HCT116 (cell line): ENCODE measurements at regions of chr3 and their contacts with region 1.

Region 1: DNA sequence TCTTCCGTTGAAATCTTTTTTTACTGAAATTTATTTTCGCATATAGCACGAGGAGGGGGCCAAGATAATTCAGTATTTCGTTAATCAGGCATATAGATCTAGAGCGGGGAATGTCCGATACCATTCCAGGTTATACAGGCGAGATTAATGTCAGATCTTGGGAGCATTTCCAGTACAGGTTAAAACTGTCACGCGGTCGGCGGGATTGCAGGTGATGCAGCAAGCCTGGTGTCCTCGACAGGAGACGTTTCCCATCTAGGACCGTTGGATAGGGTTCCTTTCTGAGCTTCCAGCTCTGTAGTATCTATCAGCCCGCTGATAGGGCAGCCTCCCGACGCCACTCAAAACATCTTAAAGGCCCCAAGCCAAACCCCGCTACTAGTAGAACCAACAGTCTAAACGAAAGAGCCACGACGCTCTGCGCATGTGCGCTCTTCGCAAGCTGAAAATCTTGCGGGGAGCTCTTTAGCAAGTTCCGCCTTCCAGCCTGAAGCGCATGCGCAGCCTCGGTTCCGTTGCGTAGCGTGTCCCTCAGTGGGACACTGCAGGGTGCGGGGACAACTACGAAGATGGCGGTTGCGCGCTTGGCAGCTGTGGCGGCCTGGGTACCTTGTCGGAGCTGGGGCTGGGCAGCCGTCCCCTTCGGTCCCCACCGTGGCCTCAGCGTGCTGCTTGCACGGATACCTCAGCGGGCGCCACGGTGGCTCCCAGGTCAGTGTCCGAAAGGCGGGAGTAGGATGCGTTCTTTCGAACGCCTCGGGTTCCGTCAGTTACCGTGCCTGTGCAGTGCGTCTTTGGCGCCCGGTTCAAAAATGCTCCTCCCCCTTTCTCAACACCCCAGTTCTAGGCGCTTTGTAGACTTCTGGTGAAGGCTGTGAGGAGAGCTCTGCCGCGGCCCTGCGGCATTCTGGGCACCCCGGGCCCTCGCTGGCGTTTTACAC is at the start of gene ABHD10:
- DNase-seq: peak; percentile 100
- ATAC-seq: peak; percentile 94
- H3K4me3 ChIP-seq: peak within 1 kb of the TSS; percentile 77 to 78
- H3K27ac ChIP-seq: peak within 1 kb of the TSS; percentile 90
- H3K4me1 ChIP-seq: peaks cover 25 to 33% of the 10 kb centered on the region in 2 experiments
- H3K27me3 ChIP-seq: no peaks in the 10 kb centered on the region
- CTCF ChIP-seq: no peak
- POLR2A ChIP-seq: peak; percentile 89
- RAD21 ChIP-seq: no peak
- total RNA-seq, gene ABHD10: 295 TPM

Region 2: DNA sequence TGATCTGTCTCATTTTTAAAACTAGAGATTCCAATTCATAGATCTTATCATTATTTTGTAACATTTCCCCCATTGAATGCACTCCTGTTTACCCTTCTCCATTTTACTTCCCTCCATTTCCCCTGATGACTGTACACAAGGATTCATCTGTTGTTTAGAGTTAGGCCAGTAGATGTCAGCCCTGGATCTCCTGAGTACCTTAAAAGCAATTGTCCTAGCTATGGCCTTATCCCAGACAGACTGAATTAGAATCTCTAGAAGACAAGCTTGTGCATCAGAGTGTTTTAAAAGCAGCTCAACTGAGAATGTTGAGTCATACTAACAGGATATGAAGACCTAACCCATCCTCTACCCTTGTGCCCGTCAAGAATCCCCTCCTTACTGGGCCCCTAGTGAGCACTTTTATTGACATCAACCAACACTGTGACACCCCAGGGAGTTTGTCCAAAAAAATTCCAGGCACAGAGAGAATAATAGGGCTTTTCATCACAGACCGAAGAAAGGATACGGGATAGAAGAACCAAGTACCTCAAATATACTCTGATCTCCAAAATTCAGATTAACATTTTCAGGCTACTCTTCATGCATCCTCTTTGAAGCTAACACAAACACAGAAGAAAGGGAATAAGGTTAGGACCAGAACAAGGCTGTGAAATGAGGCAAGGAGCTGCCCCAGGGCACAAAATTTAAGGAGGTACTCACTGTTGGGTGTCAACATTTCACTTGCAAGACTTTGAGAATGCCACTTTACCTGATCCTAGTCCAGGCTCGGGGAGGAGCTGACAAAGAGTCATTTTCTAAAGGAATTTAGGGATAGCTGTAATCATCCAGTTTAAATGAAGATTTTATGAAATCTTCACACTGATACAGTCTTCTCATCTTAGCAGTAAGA is 400.7 kb before region 1 on chr3:
- CTCF ChIA-PET with region 1: interaction called, 3 read pairs
- POLR2A ChIA-PET with region 1: no interaction called
- RAD21 ChIA-PET with region 1: no interaction called
- intact Hi-C with region 1: loop called (anchors 10 kb)
- DNase-seq: peak; percentile 69
- ATAC-seq: peak; percentile 83
- H3K4me3 ChIP-seq: no peak overlapping the region
- H3K27ac ChIP-seq: peak overlapping the region; percentile 7; the same call in 1 of the 2 replicates
- H3K4me1 ChIP-seq: peaks cover 30 to 64% of the 10 kb centered on the region in 2 experiments
- H3K27me3 ChIP-seq: no peaks in the 10 kb centered on the region
- CTCF ChIP-seq: peak; percentile 60 to 79 (median 77)
- POLR2A ChIP-seq: no peak
- RAD21 ChIP-seq: peak; percentile 92

Region 3: DNA sequence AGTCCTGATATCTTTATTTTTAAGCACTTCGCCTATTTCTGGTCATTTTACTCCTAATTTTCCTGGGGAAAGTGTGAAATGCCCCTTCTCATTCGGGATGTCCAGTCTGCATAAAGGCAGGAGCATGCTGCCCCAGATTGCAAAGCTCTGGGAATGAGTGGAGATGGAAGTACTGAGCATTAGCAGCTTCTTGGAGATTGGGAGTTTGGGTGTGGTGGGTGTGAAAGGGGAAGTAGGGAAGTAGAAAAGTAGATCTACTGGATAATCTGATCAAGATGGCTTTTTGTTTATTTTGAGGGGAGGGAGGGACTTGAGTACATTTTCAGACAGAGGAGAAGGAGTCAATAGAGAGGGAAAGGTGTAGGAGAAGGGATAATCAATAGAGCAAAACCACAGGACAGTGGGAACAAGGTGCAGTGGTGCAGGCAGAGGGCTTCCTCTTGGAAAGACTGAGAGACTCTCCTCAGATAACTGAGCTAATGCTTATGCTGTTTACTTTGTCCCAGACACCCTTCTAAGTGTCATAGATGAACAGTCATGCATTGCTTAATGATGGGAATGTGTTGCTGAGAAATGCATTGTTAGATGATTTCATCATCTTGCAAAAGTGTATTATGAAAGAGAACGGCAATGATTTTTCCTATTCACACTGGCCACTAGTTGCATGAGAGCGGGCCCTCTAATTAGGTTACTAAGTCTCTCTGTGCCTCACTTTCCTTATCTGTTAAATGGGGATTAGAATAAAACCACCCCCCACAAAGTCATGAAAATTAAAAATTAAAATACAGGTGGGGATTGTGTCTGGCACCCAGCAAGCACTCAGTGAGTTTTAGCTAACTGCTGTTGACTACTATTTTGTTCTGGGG is 74.2 kb before region 1 on chr3:
- CTCF ChIA-PET with region 1: no interaction called
- POLR2A ChIA-PET with region 1: interaction called, 17 read pairs
- RAD21 ChIA-PET with region 1: no interaction called
- intact Hi-C with region 1: no loop called
- DNase-seq: peak; percentile 89
- ATAC-seq: peak; percentile 29
- H3K4me3 ChIP-seq: no peak overlapping the region
- H3K27ac ChIP-seq: peak overlapping the region; percentile 96
- H3K4me1 ChIP-seq: peaks cover 44 to 100% of the 10 kb centered on the region in 2 experiments
- H3K27me3 ChIP-seq: no peaks in the 10 kb centered on the region
- CTCF ChIP-seq: peak in 1 of 3 experiments; percentile 26; a peak in 2 of 6 replicates
- POLR2A ChIP-seq: no peak
- RAD21 ChIP-seq: no peak

Region 4: GRCh38 chr3:111936191-111936841 is 42.4 kb before region 1 on chr3:
- CTCF ChIA-PET with region 1: no interaction called
- POLR2A ChIA-PET with region 1: interaction called, 13 read pairs
- RAD21 ChIA-PET with region 1: no interaction called
- intact Hi-C with region 1: no loop called
- DNase-seq: peak; percentile 60
- ATAC-seq: peak; percentile 78
- H3K4me3 ChIP-seq: peak overlapping the region in 1 of 2 experiments; percentile 0; a peak in 1 of 4 replicates
- H3K27ac ChIP-seq: peak overlapping the region; percentile 96
- H3K4me1 ChIP-seq: peaks cover 66 to 78% of the 10 kb centered on the region in 2 experiments
- H3K27me3 ChIP-seq: no peaks in the 10 kb centered on the region
- CTCF ChIP-seq: no peak
- POLR2A ChIP-seq: no peak
- RAD21 ChIP-seq: 0 out of 2 replicates have a peak, but pooled peaks have one; percentile 2

Region 5: DNA sequence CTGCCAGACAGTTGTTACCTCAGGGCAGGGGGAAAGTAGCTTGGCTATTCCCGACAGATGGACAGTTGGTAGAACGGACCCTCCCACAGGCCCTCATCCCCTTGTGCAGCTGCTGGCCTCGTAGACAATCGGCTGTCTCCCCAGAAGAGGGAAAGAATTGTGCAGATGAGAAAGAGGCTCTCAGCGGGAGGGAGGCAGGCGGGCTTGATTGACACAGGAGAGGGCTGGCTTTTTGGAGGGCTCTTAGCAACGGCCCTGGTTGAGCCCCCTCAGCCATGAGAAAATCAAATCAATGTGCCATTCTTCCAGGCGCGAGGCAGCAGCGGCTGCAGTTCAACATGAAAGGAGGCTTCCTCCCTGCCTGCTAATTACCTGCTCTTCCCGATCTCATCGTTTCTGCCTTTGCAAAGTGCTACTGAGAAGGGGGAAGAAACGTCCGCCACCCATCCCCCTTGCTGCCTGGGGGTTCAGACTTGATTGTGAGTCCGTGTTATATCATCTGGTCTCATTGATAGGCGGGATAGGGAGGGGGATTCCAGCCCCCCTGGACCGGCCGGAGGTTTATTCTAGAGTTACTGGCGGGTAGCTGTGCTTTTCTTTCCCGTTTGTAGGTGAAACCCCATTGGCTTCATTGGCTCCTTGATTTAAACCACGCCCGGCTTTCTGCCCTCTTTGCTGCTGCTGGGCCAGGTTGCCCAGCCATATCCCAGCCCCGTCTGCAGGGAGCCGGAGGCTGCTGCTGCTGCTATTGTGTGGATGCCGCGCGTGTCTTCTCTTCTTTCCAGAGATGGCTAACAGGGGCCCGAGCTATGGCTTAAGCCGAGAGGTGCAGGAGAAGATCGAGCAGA is 20.1 kb after region 1 on chr3 and contains the start of gene TAGLN3:
- CTCF ChIA-PET with region 1: interaction called, 9 read pairs
- POLR2A ChIA-PET with region 1: interaction called, 21 read pairs
- RAD21 ChIA-PET with region 1: no interaction called
- intact Hi-C with region 1: no loop called
- DNase-seq: no peak
- ATAC-seq: no peak
- H3K4me3 ChIP-seq: no peak within 1 kb of the TSS
- H3K27ac ChIP-seq: no peak within 1 kb of the TSS
- H3K4me1 ChIP-seq: peaks cover 2 to 24% of the 10 kb centered on the region in 2 experiments; a peak in 3 of 4 replicates
- H3K27me3 ChIP-seq: no peaks in the 10 kb centered on the region
- CTCF ChIP-seq: no peak
- POLR2A ChIP-seq: no peak
- RAD21 ChIP-seq: no peak
- total RNA-seq, gene TAGLN3: 0.64 TPM

Region 6: GRCh38 chr3:112086076-112086854 is 107.5 kb after region 1 on chr3 and contains the start of gene C3orf52:
- CTCF ChIA-PET with region 1: no interaction called
- POLR2A ChIA-PET with region 1: no interaction called
- RAD21 ChIA-PET with region 1: no interaction called
- intact Hi-C with region 1: no loop called
- DNase-seq: peak; percentile 67
- ATAC-seq: peak; percentile 94
- H3K4me3 ChIP-seq: peak within 1 kb of the TSS; percentile 55 to 73
- H3K27ac ChIP-seq: peak within 1 kb of the TSS; percentile 66
- H3K4me1 ChIP-seq: peaks cover 28 to 39% of the 10 kb centered on the region in 2 experiments
- H3K27me3 ChIP-seq: no peaks in the 10 kb centered on the region
- CTCF ChIP-seq: peak in 1 of 3 experiments; percentile 20; a peak in 2 of 6 replicates
- POLR2A ChIP-seq: no peak
- RAD21 ChIP-seq: no peak
- total RNA-seq, gene C3orf52: 14.3 TPM

Region 7: GRCh38 chr3:112550859-112551258 is 572.1 kb after region 1 on chr3:
- CTCF ChIA-PET with region 1: no interaction called
- POLR2A ChIA-PET with region 1: no interaction called
- RAD21 ChIA-PET with region 1: no interaction called
- intact Hi-C with region 1: no loop called
- DNase-seq: no peak
- ATAC-seq: no peak
- H3K4me3 ChIP-seq: no peak overlapping the region
- H3K27ac ChIP-seq: no peak overlapping the region
- H3K4me1 ChIP-seq: no peaks in the 10 kb centered on the region
- H3K27me3 ChIP-seq: no peaks in the 10 kb centered on the region
- CTCF ChIP-seq: no peak
- POLR2A ChIP-seq: no peak
- RAD21 ChIP-seq: no peak

Region 8: DNA sequence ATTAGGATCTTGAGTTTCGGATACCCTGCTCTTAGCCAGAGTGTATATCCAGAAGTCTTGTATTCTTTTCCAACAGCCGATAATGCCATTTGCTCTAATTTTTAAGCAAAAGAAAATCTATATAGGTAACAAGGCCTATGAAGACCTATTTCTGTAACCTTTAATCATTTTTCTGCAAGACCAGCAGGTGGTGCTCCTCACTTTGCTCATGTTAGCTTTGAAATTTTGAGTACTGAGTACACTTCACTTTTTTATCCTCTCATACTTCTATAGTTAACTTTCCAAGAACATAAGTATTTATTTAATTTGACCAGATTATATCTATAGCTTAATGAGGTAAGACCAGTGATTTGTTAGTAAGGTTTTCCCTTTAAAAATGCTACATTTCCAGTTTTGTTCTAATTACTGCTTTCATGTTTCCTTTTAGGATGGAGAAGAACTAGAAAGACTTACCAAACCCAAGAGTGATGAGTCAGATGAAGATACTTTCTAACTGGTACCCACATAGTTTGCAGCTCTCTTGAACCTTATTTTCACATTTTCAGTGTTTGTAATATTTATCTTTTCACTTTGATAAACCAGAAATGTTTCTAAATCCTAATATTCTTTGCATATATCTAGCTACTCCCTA is 603.6 kb after region 1 on chr3:
- CTCF ChIA-PET with region 1: no interaction called
- POLR2A ChIA-PET with region 1: no interaction called
- RAD21 ChIA-PET with region 1: no interaction called
- intact Hi-C with region 1: no loop called
- DNase-seq: peak; percentile 34
- ATAC-seq: peak; percentile 64
- H3K4me3 ChIP-seq: no peak overlapping the region
- H3K27ac ChIP-seq: no peak overlapping the region
- H3K4me1 ChIP-seq: no peaks in the 10 kb centered on the region
- H3K27me3 ChIP-seq: no peaks in the 10 kb centered on the region
- CTCF ChIP-seq: peak; percentile 41 to 71 (median 62); a peak in 5 of 6 replicates
- POLR2A ChIP-seq: no peak
- RAD21 ChIP-seq: peak; percentile 72